Activated T-helper 2 cell treated with anti-CD3 and anti-CD28 coated beads, Interferon-gamma antibody, Interleukin-2, Interleukin-4, amounts not matched to agents 10 μg/mL and 5 μg/mL and 100 μg/mL, durations not matched to agents 14 hours and 24 hours and 36 hours (primary cell): ENCODE measurements at regions of chr1 and their contacts with region 1.

Region 1: DNA sequence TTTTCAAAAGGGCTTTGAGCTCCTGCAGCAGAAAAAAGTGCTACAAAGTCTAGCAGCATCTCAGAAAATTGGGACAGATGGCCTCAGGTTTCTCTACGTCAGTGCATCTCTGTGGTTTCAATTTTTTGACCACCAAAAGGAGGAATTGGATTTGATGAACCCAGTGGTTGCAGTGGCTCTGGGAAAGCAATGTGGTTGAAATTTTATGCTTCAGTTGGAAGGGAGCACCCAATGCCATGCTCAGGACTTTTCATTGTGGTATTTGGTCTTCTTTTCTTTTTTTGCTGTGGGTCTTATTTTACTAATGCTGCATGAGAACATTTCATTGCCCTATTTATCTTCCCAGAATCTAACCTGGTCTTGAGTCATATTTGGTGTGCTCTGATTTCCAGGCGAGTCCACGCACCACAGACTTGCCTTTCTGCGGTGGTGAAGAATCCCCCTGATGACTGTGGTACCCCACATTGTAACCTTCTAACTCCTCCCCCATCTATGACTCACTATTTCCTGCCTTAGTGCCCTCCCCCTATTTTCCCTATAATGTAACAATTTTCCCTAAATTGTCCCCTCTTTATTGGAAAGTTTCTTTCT is 56.7 kb downstream of the S1PR1 start:
- DNase-seq: no peak
- H3K4me3 Mint-ChIP-seq: no peak overlapping the region
- H3K27ac Mint-ChIP-seq: peak overlapping the region; percentile 72
- H3K4me1 Mint-ChIP-seq: peaks cover 55% of the 10 kb centered on the region
- H3K27me3 Mint-ChIP-seq: peaks cover 24% of the 10 kb centered on the region

Region 2: DNA sequence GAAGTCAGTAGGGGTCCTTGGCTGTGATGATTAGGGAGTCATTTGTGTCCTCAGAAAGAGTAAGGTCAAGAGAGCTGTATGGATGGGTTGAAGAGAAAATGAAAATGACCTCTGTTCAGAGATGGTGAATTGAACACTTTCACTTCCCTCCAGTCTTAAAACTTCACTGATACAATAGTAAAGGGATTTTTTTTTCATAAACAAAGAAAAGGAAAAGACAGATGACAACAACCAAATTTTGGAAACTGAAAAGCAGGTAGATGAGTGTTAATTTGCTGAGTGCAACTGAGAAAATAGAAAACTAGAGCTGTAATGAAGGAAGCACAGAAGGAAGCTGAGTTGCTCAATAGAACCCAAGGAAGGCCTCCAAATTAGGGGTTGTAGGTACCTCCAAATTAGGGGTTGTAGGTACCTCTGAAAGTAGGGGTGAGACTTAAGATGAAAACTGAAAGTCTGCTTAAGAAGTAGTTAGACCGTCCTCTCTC is 71.6 kb before region 1 on chr1:
- intact Hi-C with region 1: no loop called
- DNase-seq: no peak
- H3K4me3 Mint-ChIP-seq: peak overlapping the region; percentile 66
- H3K27ac Mint-ChIP-seq: peak overlapping the region; percentile 81
- H3K4me1 Mint-ChIP-seq: peaks cover 32% of the 10 kb centered on the region
- H3K27me3 Mint-ChIP-seq: no peaks in the 10 kb centered on the region

Region 3: GRCh38 chr1:101357444-101357986 is 64.0 kb after region 1 on chr1:
- intact Hi-C with region 1: loop called (anchors 1 kb)
- DNase-seq: peak; percentile 66
- H3K4me3 Mint-ChIP-seq: no peak overlapping the region
- H3K27ac Mint-ChIP-seq: no peak overlapping the region
- H3K4me1 Mint-ChIP-seq: peaks cover 13% of the 10 kb centered on the region
- H3K27me3 Mint-ChIP-seq: peaks cover 52% of the 10 kb centered on the region